ENCODE measurements at regions of chr6 and their contacts with region 1.

Region 1: DNA sequence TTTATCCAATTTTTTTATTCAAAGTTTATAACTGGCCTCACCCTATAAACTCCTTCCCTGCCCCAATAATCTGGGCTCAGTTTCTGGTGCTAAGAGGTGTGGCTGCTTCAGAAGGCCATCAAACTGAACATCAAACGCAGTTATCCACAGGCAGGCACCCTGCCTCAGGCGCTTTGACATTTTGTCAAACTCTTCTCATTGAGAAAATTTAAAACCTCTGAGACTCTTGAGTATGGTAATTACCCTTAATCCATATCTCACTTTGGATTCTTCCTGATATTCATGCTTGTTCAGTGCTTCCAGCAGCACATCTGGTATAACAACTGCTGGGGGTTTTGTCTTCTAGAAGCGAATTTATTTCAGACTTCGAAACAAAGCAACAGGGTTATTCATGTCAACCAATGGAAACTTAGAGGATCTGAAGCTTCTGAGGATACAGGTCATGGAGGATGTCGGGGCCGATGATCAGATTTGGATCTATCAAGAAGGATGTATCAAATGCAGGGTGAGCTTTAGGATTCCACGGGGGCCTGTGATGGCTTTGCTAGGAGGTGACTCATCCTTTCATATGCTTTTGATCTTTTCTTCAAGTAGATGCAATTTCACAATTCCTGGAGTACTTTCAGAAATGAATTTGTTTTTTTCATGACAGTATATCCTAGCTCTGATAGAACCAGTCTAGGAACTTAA is 68.2 kb downstream of the RTN4IP1 start:
- DNase-seq: no peak
- H3K4me3 ChIP-seq: no peak overlapping the region
- H3K27me3 ChIP-seq: no peaks in the 10 kb centered on the region
- CTCF ChIP-seq: no peak

Region 2: GRCh38 chr6:106451439-106451838 is 109.7 kb before region 1 on chr6:
- CTCF ChIA-PET with region 1: interaction called, 308 read pairs
- POLR2A ChIA-PET with region 1: interaction called, 3 read pairs
- DNase-seq: no peak
- H3K4me3 ChIP-seq: no peak overlapping the region
- H3K27me3 ChIP-seq: no peaks in the 10 kb centered on the region; the same call in 1 of the 2 replicates
- CTCF ChIP-seq: no peak

Region 3: GRCh38 chr6:106461084-106461483 is 100.1 kb before region 1 on chr6:
- CTCF ChIA-PET with region 1: interaction called, 18 read pairs
- POLR2A ChIA-PET with region 1: no interaction called
- DNase-seq: no peak
- H3K4me3 ChIP-seq: no peak overlapping the region
- H3K27me3 ChIP-seq: peaks cover 5% of the 10 kb centered on the region
- CTCF ChIP-seq: no peak